ENCODE measurements at regions of chr6 and their contacts with region 1.

Region 1: DNA sequence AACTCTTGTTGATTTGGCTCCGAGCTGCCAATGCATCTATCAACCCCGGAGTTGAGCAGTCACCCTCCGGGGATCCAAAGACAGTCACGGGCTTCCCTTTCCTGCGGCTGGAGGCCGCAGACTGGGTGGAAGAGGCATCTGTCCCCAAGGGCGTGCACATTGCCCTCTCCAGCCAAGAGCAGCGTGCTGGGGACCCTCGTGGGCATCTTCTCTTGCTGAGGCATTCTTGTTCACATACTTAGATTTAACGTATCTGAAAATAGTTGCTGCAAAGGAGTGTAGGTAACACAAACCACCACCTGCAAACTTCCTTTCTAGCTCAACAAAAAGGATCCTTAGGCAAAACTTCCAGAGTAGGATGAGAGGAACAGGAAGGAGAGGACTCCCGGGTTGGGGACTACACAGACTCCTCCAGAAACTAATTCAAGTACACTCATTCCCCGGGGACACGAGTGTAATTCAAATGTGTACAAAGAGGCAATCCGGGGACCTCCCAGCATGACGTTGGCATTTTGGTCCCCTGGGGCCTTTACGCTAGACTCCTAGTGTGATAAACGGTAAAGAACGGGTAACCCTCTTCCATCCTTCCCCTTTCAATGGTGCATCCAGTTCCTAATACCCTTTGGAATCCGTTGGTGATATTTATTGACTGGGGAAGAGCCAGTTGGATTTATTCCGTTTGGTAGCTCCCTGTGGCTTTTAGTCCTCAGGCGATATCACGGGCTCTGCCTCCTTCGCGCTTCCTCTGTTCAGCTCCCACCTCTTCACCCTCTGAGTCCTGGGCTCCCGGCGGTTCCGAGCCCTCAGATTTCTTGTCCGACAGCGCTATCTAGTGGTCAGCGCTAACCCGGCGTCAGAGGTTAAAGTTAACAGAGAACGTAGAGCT is 2.7 kb upstream of the COL12A1 start:
- DNase-seq: peak; percentile 84
- H3K4me3 Mint-ChIP-seq: peak overlapping the region; percentile 15
- H3K27ac Mint-ChIP-seq: no peak overlapping the region
- H3K4me1 Mint-ChIP-seq: peaks cover 29% of the 10 kb centered on the region
- H3K27me3 Mint-ChIP-seq: peaks cover 8% of the 10 kb centered on the region
- CTCF ChIP-seq: peak; percentile 83

Region 2: DNA sequence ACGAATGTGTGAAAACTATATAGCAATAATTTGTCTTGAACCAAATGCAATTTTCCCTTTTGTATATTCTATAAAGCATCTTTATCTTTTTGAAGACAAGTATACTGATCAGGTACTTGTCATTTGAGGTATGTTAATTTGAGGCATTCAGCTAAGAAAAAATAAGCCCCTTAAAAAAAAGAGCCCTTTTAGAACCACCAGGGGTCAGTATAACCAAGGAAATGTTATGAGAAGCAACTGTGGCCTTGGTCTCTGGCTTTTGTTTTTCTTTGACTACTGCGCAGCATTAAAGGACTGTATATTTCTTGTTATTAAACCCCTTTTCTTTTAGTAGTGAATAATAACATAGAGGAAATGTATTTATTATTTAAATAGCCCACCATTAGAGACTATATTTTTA is 1469.4 kb before region 1 on chr6:
- CTCF ChIA-PET with region 1: interaction called, 33 read pairs
- POLR2A ChIA-PET with region 1: no interaction called
- intact Hi-C with region 1: loop called (anchors 1 kb)
- DNase-seq: peak; percentile 68
- H3K4me3 Mint-ChIP-seq: no peak overlapping the region
- H3K27ac Mint-ChIP-seq: no peak overlapping the region
- H3K4me1 Mint-ChIP-seq: peaks cover 28% of the 10 kb centered on the region
- H3K27me3 Mint-ChIP-seq: no peaks in the 10 kb centered on the region
- CTCF ChIP-seq: peak; percentile 75

Region 3: DNA sequence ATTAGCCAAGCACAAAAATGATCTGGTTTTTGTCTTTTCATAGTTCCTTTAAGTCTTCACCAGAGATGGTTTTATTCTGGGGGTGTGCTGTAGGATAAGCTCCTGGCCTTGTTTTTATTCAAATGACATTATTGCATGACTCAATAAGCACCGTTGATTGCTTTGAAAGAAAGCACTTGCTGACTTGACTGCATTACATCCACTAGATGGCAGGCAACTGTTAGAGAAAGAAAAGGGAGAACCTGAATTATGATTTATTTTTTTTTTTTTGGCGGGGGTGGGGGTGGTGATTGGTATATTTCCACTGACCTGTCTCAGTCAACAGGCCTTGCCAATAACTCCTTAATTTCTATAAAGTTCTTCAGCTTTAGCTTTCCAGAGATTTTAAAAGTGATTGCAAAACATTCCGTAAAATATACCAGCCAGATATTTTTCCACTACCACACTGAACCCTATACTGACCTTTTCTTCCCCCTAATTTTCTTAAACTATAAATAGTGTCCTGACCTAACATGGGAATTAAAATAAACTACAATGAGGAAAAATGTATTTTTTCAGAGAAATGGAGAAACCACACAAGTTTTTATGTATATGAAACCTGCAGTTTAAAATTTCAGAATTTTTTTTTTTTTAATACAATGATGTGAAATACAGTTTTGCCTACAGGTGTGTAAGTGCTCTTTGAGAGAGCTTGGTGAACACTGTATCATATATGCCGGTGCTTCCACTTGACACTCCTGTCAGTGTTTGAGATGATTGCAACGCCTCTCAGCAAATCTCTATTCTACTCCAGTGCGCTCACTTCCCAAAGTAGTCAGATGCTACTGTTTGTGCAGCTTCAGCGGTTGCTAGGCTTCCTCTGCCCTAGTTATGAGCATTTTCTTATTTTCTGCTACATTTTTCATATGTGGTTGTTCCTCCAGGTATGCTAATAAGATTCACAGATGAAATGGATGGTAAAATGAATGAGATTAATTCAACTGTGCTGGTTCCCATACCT is 1238.3 kb before region 1 on chr6:
- CTCF ChIA-PET with region 1: interaction called, 151 read pairs
- POLR2A ChIA-PET with region 1: interaction called, 3 read pairs
- intact Hi-C with region 1: loop called (anchors 1 kb)
- DNase-seq: peak; percentile 79
- H3K4me3 Mint-ChIP-seq: no peak overlapping the region
- H3K27ac Mint-ChIP-seq: peak overlapping the region; percentile 42
- H3K4me1 Mint-ChIP-seq: no peaks in the 10 kb centered on the region
- H3K27me3 Mint-ChIP-seq: no peaks in the 10 kb centered on the region
- CTCF ChIP-seq: peak; percentile 68

Region 4: GRCh38 chr6:74343804-74344203 is 864.7 kb before region 1 on chr6:
- CTCF ChIA-PET with region 1: interaction called, 29 read pairs
- POLR2A ChIA-PET with region 1: interaction called, 3 read pairs
- intact Hi-C with region 1: loop called (anchors 1 kb)
- DNase-seq: peak; percentile 28
- H3K4me3 Mint-ChIP-seq: no peak overlapping the region
- H3K27ac Mint-ChIP-seq: no peak overlapping the region
- H3K4me1 Mint-ChIP-seq: no peaks in the 10 kb centered on the region
- H3K27me3 Mint-ChIP-seq: no peaks in the 10 kb centered on the region
- CTCF ChIP-seq: no peak

Region 5: GRCh38 chr6:74749211-74750142 is 459.1 kb before region 1 on chr6:
- CTCF ChIA-PET with region 1: interaction called, 4 read pairs
- POLR2A ChIA-PET with region 1: interaction called, 22 read pairs
- intact Hi-C with region 1: loop called (anchors 1 kb)
- DNase-seq: peak; percentile 77
- H3K4me3 Mint-ChIP-seq: peak overlapping the region; percentile 61
- H3K27ac Mint-ChIP-seq: peak overlapping the region; percentile 90
- H3K4me1 Mint-ChIP-seq: peaks cover 47% of the 10 kb centered on the region
- H3K27me3 Mint-ChIP-seq: no peaks in the 10 kb centered on the region
- CTCF ChIP-seq: no peak

Region 6: GRCh38 chr6:75065523-75065922 is 143.0 kb before region 1 on chr6:
- CTCF ChIA-PET with region 1: no interaction called
- POLR2A ChIA-PET with region 1: no interaction called
- intact Hi-C with region 1: no loop called
- DNase-seq: no peak
- H3K4me3 Mint-ChIP-seq: no peak overlapping the region
- H3K27ac Mint-ChIP-seq: no peak overlapping the region
- H3K4me1 Mint-ChIP-seq: no peaks in the 10 kb centered on the region
- H3K27me3 Mint-ChIP-seq: no peaks in the 10 kb centered on the region
- CTCF ChIP-seq: no peak

Region 7: GRCh38 chr6:75098709-75099108 is 109.8 kb before region 1 on chr6:
- CTCF ChIA-PET with region 1: interaction called, 4 read pairs
- POLR2A ChIA-PET with region 1: no interaction called
- intact Hi-C with region 1: loop called (anchors 1 kb)
- DNase-seq: peak; percentile 88
- H3K4me3 Mint-ChIP-seq: no peak overlapping the region
- H3K27ac Mint-ChIP-seq: peak overlapping the region; percentile 71
- H3K4me1 Mint-ChIP-seq: peaks cover 13% of the 10 kb centered on the region
- H3K27me3 Mint-ChIP-seq: no peaks in the 10 kb centered on the region
- CTCF ChIP-seq: no peak

Region 8: GRCh38 chr6:76351275-76351674 is 1142.7 kb after region 1 on chr6:
- CTCF ChIA-PET with region 1: no interaction called
- POLR2A ChIA-PET with region 1: no interaction called
- intact Hi-C with region 1: no loop called
- DNase-seq: peak; percentile 53
- H3K4me3 Mint-ChIP-seq: no peak overlapping the region
- H3K27ac Mint-ChIP-seq: no peak overlapping the region
- H3K4me1 Mint-ChIP-seq: no peaks in the 10 kb centered on the region
- H3K27me3 Mint-ChIP-seq: no peaks in the 10 kb centered on the region
- CTCF ChIP-seq: peak; percentile 32

Measured in MCF 10A (cell line).